CD8-positive, alpha-beta T cell (primary cell): ENCODE measurements at regions of chr10 and their contacts with region 1.

Region 1: GRCh38 chr10:50410066-50410811 is 158.9 kb upstream of the ASAH2 start:
- DNase-seq: peak in 1 of 9 experiments; percentile 12
- ATAC-seq: no peak
- H3K4me3 ChIP-seq: no peak overlapping the region
- H3K4me3 Mint-ChIP-seq: no peak overlapping the region
- H3K27ac ChIP-seq: no peak overlapping the region
- H3K27ac Mint-ChIP-seq: no peak overlapping the region
- H3K4me1 ChIP-seq: no peaks in the 10 kb centered on the region
- H3K4me1 Mint-ChIP-seq: peaks cover 22% of the 10 kb centered on the region
- H3K27me3 ChIP-seq: no peaks in the 10 kb centered on the region
- H3K27me3 Mint-ChIP-seq: no peaks in the 10 kb centered on the region
- CTCF ChIP-seq: no peak

Region 2: DNA sequence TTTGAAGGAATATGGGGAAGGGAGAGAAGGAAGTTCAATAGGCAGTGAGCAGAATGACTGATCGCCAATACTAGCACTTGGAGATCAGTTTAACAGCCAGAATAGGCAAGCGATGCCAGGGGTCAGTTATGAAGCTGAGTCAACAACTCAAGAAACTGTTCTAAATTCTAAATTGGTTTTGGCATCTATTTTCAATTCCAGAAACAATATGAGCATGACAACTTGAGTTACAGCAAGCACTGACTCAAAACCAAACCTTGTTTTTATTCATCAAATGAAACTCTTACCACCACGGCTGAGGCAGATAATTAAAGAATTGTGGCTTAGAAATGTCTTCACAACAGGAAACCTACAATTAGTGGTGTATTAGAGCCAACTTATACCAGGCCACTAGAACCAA is 21.6 kb after region 1 on chr10:
- CTCF ChIA-PET with region 1: no interaction called
- POLR2A ChIA-PET with region 1: no interaction called
- intact Hi-C with region 1: loop called in 1 of 2 experiments (anchors 2 kb)
- DNase-seq: peak in 1 of 9 experiments; percentile 11
- ATAC-seq: no peak
- H3K4me3 ChIP-seq: no peak overlapping the region
- H3K4me3 Mint-ChIP-seq: peak overlapping the region; percentile 20
- H3K27ac ChIP-seq: peak overlapping the region in 1 of 2 experiments; percentile 15
- H3K27ac Mint-ChIP-seq: no peak overlapping the region
- H3K4me1 ChIP-seq: no peaks in the 10 kb centered on the region
- H3K4me1 Mint-ChIP-seq: peaks cover 30% of the 10 kb centered on the region
- H3K27me3 ChIP-seq: no peaks in the 10 kb centered on the region
- H3K27me3 Mint-ChIP-seq: no peaks in the 10 kb centered on the region
- CTCF ChIP-seq: no peak

Region 3: DNA sequence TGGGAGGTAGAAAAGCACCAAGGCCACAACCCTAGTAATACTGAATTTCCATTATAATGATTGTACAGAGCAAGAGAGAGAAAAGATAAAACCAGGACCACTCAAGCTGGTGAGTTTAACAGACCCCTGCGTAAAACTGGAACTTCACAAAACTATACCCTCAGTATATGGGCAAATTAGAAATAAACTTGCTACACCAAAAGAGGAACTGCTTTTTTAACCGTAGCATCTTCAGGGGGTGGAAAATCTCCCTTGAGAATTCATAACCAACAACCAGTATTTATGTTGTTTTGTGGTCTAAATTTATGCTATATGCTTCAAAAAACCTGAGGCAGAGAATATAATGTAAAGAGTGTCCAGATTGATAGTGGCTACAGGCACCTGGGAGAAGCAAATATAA is 42.4 kb after region 1 on chr10:
- CTCF ChIA-PET with region 1: no interaction called
- POLR2A ChIA-PET with region 1: no interaction called
- intact Hi-C with region 1: no loop called
- DNase-seq: no peak
- ATAC-seq: no peak
- H3K4me3 ChIP-seq: no peak overlapping the region
- H3K4me3 Mint-ChIP-seq: no peak overlapping the region
- H3K27ac ChIP-seq: no peak overlapping the region
- H3K27ac Mint-ChIP-seq: no peak overlapping the region
- H3K4me1 ChIP-seq: peaks cover 4% of the 10 kb centered on the region
- H3K4me1 Mint-ChIP-seq: peaks cover 27% of the 10 kb centered on the region
- H3K27me3 ChIP-seq: no peaks in the 10 kb centered on the region
- H3K27me3 Mint-ChIP-seq: no peaks in the 10 kb centered on the region
- CTCF ChIP-seq: no peak